ENCODE measurements at regions of chr2 and their contacts with region 1.

Region 1: GRCh38 chr2:172905937-172906811 is 169.5 kb upstream of the MAP3K20 start:
- DNase-seq: no peak
- H3K4me3 ChIP-seq: no peak overlapping the region
- H3K27ac ChIP-seq: no peak overlapping the region
- H3K4me1 ChIP-seq: no peaks in the 10 kb centered on the region
- H3K27me3 ChIP-seq: no peaks in the 10 kb centered on the region
- CTCF ChIP-seq: no peak
- POLR2A ChIP-seq: no peak

Region 2: DNA sequence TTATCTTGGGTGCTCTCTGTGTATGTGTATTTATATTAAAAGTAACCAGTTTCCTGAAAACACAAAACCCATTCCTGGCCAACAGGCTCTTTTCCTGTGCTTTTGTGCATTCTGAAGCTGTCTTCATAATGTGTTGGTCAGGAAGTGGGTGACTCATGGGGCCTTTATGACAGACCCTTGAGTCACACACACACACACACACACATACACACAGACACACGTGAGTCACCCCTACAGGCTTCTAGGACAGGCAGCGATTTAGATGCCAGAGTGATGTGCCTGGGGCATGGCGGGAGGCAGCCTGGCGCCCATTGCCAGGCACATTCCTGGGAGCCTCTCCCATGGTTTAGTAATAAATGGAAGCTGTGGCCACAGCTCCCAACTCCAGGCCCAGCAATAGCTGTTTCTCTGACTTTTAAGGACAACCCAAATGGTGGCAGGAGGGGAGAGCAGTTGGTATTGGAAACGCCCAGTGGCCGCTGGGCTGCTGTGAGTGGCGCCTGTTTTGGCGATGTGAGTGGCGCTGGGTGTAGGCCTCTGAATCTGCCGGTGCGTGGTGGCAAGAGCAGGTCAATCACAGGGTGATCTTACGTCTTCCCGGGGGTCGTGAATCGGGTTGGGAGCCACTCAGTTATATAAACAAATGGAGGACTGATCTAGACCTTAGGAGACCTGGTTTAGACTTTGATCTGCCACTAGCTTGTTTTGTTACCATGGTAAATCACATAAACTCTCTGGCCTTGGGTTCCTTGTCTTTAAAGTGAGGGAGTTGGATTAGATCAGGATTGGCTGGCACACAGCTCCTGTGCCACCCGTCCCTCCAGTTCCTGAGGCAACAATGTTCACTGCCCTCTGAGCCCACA is 652.8 kb before region 1 on chr2:
- intact Hi-C with region 1: no loop called
- DNase-seq: peak in 1 of 2 donors; percentile 69
- H3K4me3 ChIP-seq: no peak overlapping the region
- H3K27ac ChIP-seq: peak overlapping the region; percentile 67 to 82
- H3K4me1 ChIP-seq: no peaks in the 10 kb centered on the region
- H3K27me3 ChIP-seq: no peaks in the 10 kb centered on the region
- CTCF ChIP-seq: no peak
- POLR2A ChIP-seq: no peak

Region 3: GRCh38 chr2:172578054-172578453 is 328.1 kb before region 1 on chr2:
- intact Hi-C with region 1: no loop called
- DNase-seq: no peak
- H3K4me3 ChIP-seq: no peak overlapping the region
- H3K27ac ChIP-seq: no peak overlapping the region
- H3K4me1 ChIP-seq: no peaks in the 10 kb centered on the region
- H3K27me3 ChIP-seq: no peaks in the 10 kb centered on the region
- CTCF ChIP-seq: no peak
- POLR2A ChIP-seq: no peak

Region 4: DNA sequence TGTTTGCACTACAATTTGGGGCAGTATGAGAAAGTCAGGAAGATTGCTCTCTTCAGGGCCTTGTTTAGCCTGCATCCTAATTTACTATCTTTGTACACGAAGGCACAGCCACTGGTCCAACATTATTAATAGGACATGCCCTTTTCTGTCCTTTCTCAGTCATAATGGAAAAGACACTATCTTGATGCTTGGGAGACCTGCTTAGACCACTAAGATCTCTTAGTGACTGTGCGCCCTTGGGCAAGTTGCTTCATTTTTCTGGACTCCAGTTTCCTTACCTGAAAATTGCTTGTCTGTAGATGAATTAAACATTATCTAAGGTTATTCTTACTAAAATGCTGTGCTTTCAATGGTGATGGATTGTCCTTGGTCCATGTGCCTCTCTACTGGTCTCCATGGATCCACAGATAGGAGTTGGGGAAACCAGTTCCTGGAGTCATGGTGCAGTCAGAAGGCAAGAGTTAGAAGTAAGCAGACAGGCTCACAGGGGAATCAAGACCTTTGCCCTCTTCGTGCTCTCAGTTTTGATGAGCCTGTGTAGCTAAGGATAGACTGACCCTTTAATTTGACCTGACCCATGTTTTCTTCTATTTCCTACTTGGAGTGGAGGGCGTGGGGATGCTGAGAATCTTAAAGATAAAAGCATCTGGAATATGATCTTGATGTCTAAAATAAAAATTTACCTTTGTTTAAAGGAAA is 56.5 kb before region 1 on chr2:
- intact Hi-C with region 1: loop called (anchors 2 kb)
- DNase-seq: no peak
- H3K4me3 ChIP-seq: no peak overlapping the region
- H3K27ac ChIP-seq: no peak overlapping the region
- H3K4me1 ChIP-seq: no peaks in the 10 kb centered on the region
- H3K27me3 ChIP-seq: no peaks in the 10 kb centered on the region
- CTCF ChIP-seq: no peak
- POLR2A ChIP-seq: no peak

Measured in breast epithelium (tissue), 4 donors.